T-cell (primary cell): ENCODE measurements at regions of chr1 and their contacts with region 1.

Region 1: GRCh38 chr1:197761621-197762020 is 13.7 kb downstream of the DENND1B start:
- DNase-seq: no peak
- ATAC-seq: peak in 1 of 4 experiments; percentile 36
- H3K4me3 ChIP-seq: peak overlapping the region in 1 of 2 donors; percentile 23
- H3K4me3 Mint-ChIP-seq: no peak overlapping the region
- H3K27ac ChIP-seq: no peak overlapping the region
- H3K27ac Mint-ChIP-seq: no peak overlapping the region
- H3K4me1 ChIP-seq: peaks cover 0 to 16% of the 10 kb centered on the region in 2 experiments
- H3K4me1 Mint-ChIP-seq: peaks cover 51 to 63% (median 55%) of the 10 kb centered on the region in 3 donors
- H3K27me3 ChIP-seq: no peaks in the 10 kb centered on the region
- H3K27me3 Mint-ChIP-seq: no peaks in the 10 kb centered on the region

Region 2: GRCh38 chr1:197423006-197423405 is 338.6 kb before region 1 on chr1:
- CTCF ChIA-PET with region 1: no interaction called
- POLR2A ChIA-PET with region 1: no interaction called
- DNase-seq: no peak
- ATAC-seq: no peak
- H3K4me3 ChIP-seq: no peak overlapping the region
- H3K4me3 Mint-ChIP-seq: no peak overlapping the region
- H3K27ac ChIP-seq: no peak overlapping the region
- H3K27ac Mint-ChIP-seq: no peak overlapping the region
- H3K4me1 ChIP-seq: no peaks in the 10 kb centered on the region
- H3K4me1 Mint-ChIP-seq: no peaks in the 10 kb centered on the region
- H3K27me3 ChIP-seq: no peaks in the 10 kb centered on the region
- H3K27me3 Mint-ChIP-seq: no peaks in the 10 kb centered on the region

Region 3: DNA sequence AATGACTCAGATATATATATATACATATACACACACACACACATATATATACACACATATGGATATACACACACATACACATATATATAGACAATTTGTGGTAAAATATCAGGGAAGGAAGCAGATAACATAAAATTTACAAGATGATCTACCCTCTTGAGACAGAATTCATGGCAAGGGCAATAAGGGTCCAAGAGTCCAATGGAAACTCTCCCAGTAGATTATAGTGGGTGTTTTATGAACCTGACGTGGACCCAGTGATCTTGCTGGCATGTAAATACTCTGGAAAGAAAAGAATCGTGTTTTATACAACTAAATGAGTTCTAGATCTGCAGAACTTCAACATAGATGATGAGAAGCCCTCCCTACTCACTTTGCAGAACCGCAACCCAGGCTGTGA is 35.6 kb before region 1 on chr1:
- CTCF ChIA-PET with region 1: no interaction called
- POLR2A ChIA-PET with region 1: no interaction called
- DNase-seq: no peak
- ATAC-seq: no peak
- H3K4me3 ChIP-seq: no peak overlapping the region
- H3K4me3 Mint-ChIP-seq: no peak overlapping the region
- H3K27ac ChIP-seq: no peak overlapping the region
- H3K27ac Mint-ChIP-seq: no peak overlapping the region
- H3K4me1 ChIP-seq: no peaks in the 10 kb centered on the region
- H3K4me1 Mint-ChIP-seq: peaks cover 6 to 7% (median 6%) of the 10 kb centered on the region in 3 donors
- H3K27me3 ChIP-seq: no peaks in the 10 kb centered on the region
- H3K27me3 Mint-ChIP-seq: no peaks in the 10 kb centered on the region

Region 4: DNA sequence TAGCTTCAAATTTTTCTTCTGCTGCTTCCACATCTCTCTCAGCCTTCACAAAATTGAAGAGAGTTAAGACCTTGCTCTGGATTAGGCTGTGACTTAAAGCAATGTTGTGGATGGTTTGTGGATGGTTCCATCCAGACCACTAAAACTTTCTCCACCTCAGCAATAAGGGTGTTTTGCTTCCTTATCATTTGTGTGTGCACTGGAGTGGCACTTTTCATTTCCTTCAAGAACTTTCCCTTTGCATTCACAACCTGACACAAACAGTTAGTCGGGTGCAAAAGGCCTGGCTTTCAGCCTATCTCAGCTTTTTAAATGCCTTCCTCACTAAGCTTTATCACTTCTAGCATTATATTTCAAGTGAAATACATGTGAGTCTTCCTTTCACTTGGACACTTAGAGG is 16.6 kb before region 1 on chr1:
- CTCF ChIA-PET with region 1: no interaction called
- POLR2A ChIA-PET with region 1: interaction called, 5 to 13 read pairs
- DNase-seq: no peak
- ATAC-seq: no peak
- H3K4me3 ChIP-seq: no peak overlapping the region
- H3K4me3 Mint-ChIP-seq: no peak overlapping the region
- H3K27ac ChIP-seq: no peak overlapping the region
- H3K27ac Mint-ChIP-seq: no peak overlapping the region
- H3K4me1 ChIP-seq: peaks cover 0 to 2% of the 10 kb centered on the region in 2 experiments
- H3K4me1 Mint-ChIP-seq: peaks cover 69 to 75% (median 70%) of the 10 kb centered on the region in 3 donors
- H3K27me3 ChIP-seq: no peaks in the 10 kb centered on the region
- H3K27me3 Mint-ChIP-seq: no peaks in the 10 kb centered on the region

Region 5: GRCh38 chr1:197775282-197776262 is 14.0 kb after region 1 on chr1 and contains the start of gene DENND1B:
- CTCF ChIA-PET with region 1: no interaction called
- POLR2A ChIA-PET with region 1: interaction called in 1 of 2 experiments, 11 read pairs
- DNase-seq: peak; percentile 67 to 88 (median 79)
- ATAC-seq: peak; percentile 71 to 76 (median 75)
- H3K4me3 ChIP-seq: peak within 1 kb of the TSS; percentile 74 to 85
- H3K4me3 Mint-ChIP-seq: peak within 1 kb of the TSS; percentile 86 to 91 (median 89)
- H3K27ac ChIP-seq: peak within 1 kb of the TSS; percentile 85
- H3K27ac Mint-ChIP-seq: peak within 1 kb of the TSS; percentile 99 to 100
- H3K4me1 ChIP-seq: peaks cover 17 to 25% of the 10 kb centered on the region in 2 experiments
- H3K4me1 Mint-ChIP-seq: peaks cover 64 to 71% (median 71%) of the 10 kb centered on the region in 3 donors
- H3K27me3 ChIP-seq: no peaks in the 10 kb centered on the region
- H3K27me3 Mint-ChIP-seq: no peaks in the 10 kb centered on the region
- total RNA-seq, gene DENND1B: 13.6 to 29.8 (median 15.8) TPM